ENCODE measurements at regions of chr11 and their contacts with region 1.

Region 1: DNA sequence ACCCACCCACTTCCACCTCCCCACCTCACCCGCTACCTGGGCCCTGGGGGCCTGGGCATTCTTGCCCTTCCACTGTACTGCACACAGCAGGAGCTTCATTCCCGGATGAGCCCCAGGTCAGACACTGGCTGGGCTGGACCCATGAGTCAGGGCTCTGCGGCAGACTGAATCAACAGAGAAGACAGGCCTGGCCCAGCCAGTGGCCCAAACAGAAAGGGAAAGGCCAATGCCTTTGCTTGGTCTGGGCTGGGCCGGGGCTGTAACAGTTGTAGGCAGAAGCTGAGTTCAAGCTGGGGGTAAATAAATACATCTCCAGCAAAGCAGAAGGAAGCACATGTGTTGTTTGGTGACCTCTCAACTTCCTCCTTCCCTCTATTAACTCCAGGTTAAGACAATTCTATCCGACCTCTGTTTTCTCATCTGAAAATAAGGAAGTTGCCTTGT is 1.7 kb upstream of the SMIM35 start:
- DNase-seq: no peak
- H3K4me3 ChIP-seq: no peak overlapping the region
- H3K27ac ChIP-seq: no peak overlapping the region
- H3K4me1 ChIP-seq: peaks cover 0 to 14% (median 11%) of the 10 kb centered on the region in 4 donors
- H3K27me3 ChIP-seq: peaks cover 0 to 10% (median 0%) of the 10 kb centered on the region in 3 donors
- CTCF ChIP-seq: no peak
- EP300 ChIP-seq: no peak
- POLR2A ChIP-seq: no peak

Region 2: GRCh38 chr11:117479372-117479771 is 609.1 kb before region 1 on chr11:
- intact Hi-C with region 1: loop called (anchors 10 kb)
- DNase-seq: no peak
- H3K4me3 ChIP-seq: no peak overlapping the region
- H3K27ac ChIP-seq: no peak overlapping the region
- H3K4me1 ChIP-seq: no peaks in the 10 kb centered on the region
- H3K27me3 ChIP-seq: no peaks in the 10 kb centered on the region
- CTCF ChIP-seq: no peak
- EP300 ChIP-seq: no peak
- POLR2A ChIP-seq: no peak

Region 3: DNA sequence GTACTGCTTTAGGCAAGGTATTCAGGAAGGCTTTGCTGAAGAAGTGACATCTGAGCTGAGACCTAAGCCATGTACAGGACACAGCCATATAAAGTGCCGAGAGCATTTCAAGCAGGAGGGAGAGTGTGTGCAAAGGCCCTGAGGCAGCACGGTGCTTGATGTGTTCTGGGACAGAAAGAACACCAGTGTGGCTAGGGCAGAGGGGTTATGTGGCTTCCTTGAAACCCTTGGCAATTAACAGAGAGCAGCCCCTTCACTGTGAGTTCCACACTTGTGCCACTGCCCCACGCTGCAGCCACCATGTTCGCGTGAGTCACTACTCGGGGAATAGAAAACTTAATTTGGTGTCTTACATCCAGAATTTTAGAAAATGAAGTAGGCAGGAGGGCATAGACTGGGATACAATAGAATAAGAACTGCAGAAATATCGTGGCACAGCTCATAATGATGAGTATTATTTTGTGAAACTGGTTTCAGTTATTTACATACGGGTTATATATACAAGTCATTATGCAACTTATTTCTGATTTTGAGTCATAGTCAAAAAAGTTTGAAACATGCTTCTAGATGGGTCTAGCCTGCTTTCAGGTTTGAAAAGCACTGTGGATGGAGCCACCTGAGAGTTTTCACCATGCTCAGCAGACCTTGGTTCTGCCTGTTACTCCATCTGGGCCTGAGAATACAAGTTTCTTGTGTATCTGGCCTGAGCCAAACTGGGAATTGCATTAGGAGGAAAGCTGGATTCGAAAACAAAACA is 90.5 kb before region 1 on chr11:
- intact Hi-C with region 1: no loop called
- DNase-seq: no peak
- H3K4me3 ChIP-seq: no peak overlapping the region
- H3K27ac ChIP-seq: no peak overlapping the region
- H3K4me1 ChIP-seq: no peaks in the 10 kb centered on the region
- H3K27me3 ChIP-seq: no peaks in the 10 kb centered on the region
- CTCF ChIP-seq: no peak
- EP300 ChIP-seq: no peak
- POLR2A ChIP-seq: no peak